Activated naive CD4-positive, alpha-beta T cell treated with anti-CD3 and anti-CD28 coated beads, Interleukin-2, amount 10 ng/mL, durations not matched to agents 7 days and 5 days (primary cell): ENCODE measurements at regions of chr17 and their contacts with region 1.

Region 1: GRCh38 chr17:32523017-32523680 is 36.4 kb downstream of the CDK5R1 start:
- DNase-seq: peak; percentile 50
- H3K4me3 Mint-ChIP-seq: peak overlapping the region; percentile 5
- H3K27ac Mint-ChIP-seq: peak overlapping the region; percentile 89
- H3K4me1 Mint-ChIP-seq: peaks cover 71% of the 10 kb centered on the region
- H3K27me3 Mint-ChIP-seq: peaks cover 25% of the 10 kb centered on the region

Region 2: DNA sequence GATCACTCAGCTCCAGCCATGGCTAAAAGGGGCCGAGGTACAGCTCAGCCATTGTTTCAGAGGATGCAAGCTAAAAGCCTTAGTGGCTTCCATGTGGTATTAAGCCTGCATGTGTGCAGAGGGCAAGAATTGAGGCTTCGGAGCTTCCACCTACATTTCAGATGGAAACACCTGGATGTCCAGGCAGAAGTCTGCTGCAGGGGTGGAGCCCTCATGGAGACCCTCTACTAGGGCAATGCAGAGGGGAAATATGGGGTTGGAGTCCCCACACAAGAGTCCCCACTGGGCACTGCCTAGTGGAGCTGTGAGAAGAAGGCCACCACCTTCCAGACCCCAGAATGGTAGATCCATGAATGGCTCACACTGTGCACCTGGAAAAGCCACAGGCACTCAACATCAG is 93.6 kb before region 1 on chr17:
- CTCF ChIA-PET with region 1: no interaction called
- DNase-seq: no peak
- H3K4me3 Mint-ChIP-seq: no peak overlapping the region
- H3K27ac Mint-ChIP-seq: no peak overlapping the region
- H3K4me1 Mint-ChIP-seq: no peaks in the 10 kb centered on the region
- H3K27me3 Mint-ChIP-seq: no peaks in the 10 kb centered on the region

Region 3: GRCh38 chr17:32491371-32492263 is 31.5 kb before region 1 on chr17:
- CTCF ChIA-PET with region 1: interaction called, 22 read pairs
- DNase-seq: peak; percentile 41
- H3K4me3 Mint-ChIP-seq: peak overlapping the region; percentile 26
- H3K27ac Mint-ChIP-seq: peak overlapping the region; percentile 82
- H3K4me1 Mint-ChIP-seq: peaks cover 72% of the 10 kb centered on the region
- H3K27me3 Mint-ChIP-seq: peaks cover 7% of the 10 kb centered on the region

Region 4: GRCh38 chr17:32551186-32551955 is 28.2 kb after region 1 on chr17:
- CTCF ChIA-PET with region 1: interaction called, 12 read pairs
- DNase-seq: peak; percentile 28
- H3K4me3 Mint-ChIP-seq: peak overlapping the region; percentile 27
- H3K27ac Mint-ChIP-seq: peak overlapping the region; percentile 80
- H3K4me1 Mint-ChIP-seq: peaks cover 54% of the 10 kb centered on the region
- H3K27me3 Mint-ChIP-seq: peaks cover 10% of the 10 kb centered on the region

Region 5: DNA sequence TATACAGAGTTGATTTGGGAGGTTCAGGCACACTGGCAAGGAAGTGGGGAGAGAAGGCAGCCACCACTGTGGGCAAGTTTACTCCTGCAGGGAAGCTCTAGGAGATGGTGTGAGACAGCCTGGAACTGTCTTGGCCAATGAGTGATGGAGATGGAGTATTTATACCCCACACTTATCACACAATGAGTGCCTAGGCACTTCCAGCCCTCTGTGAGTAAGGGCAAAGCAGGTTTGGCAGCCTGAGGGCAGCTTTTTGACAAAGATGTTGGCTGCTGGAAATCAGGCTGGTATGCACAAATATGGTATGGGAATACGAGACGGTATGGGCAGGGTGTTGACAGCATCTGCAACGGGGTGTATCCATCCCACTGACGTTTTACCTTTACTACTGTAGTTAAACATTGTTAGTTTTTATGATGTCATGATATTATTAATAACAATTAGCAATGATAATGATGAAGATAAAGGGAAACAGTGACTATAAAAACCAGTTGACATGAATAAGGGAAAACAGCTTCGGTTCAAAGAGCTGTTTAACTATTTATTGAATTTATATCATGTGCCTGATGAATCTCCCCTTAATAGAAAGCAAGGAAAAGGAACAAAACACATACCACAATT is 113.6 kb after region 1 on chr17:
- CTCF ChIA-PET with region 1: no interaction called
- DNase-seq: no peak
- H3K4me3 Mint-ChIP-seq: no peak overlapping the region
- H3K27ac Mint-ChIP-seq: no peak overlapping the region
- H3K4me1 Mint-ChIP-seq: no peaks in the 10 kb centered on the region
- H3K27me3 Mint-ChIP-seq: peaks cover 5% of the 10 kb centered on the region